ENCODE measurements at regions of chr18 and their contacts with region 1.

Region 1: DNA sequence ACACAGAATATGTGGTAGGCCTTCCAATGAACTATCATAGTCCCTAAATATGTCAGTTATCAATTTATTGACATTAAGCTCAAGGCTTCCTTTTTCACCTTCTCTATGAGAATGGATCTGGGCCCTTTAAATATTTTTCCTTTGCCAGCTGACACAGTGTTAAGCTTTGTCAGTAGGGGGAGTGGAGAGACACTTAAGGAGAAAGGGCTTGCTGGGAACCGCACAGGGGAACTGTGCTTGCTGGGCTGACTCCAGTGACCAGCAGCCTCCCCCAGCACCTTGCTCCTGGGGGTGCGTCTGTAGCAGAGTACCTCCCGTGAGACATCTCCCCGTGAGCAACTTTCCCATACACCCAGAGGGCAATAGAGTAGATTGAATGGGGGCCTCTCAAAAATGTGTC is 6.5 kb upstream of the PTPN2 start:
- DNase-seq: no peak
- ATAC-seq: no peak
- H3K4me3 ChIP-seq: no peak overlapping the region
- H3K4me3 Mint-ChIP-seq: no peak overlapping the region
- H3K27ac ChIP-seq: no peak overlapping the region
- H3K27ac Mint-ChIP-seq: no peak overlapping the region
- H3K4me1 ChIP-seq: peaks cover 4% of the 10 kb centered on the region
- H3K4me1 Mint-ChIP-seq: peaks cover 15% of the 10 kb centered on the region
- H3K27me3 ChIP-seq: peaks cover 0 to 9% of the 10 kb centered on the region in 2 experiments
- H3K27me3 Mint-ChIP-seq: peaks cover 14% of the 10 kb centered on the region
- CTCF ChIP-seq: no peak

Region 2: GRCh38 chr18:12391618-12392165 is 498.8 kb before region 1 on chr18:
- CTCF ChIA-PET with region 1: no interaction called
- POLR2A ChIA-PET with region 1: no interaction called
- intact Hi-C with region 1: loop called (anchors 5 kb)
- DNase-seq: peak; percentile 22 to 75 (median 35)
- ATAC-seq: peak; percentile 99
- H3K4me3 ChIP-seq: no peak overlapping the region
- H3K4me3 Mint-ChIP-seq: no peak overlapping the region
- H3K27ac ChIP-seq: no peak overlapping the region
- H3K27ac Mint-ChIP-seq: no peak overlapping the region
- H3K4me1 ChIP-seq: no peaks in the 10 kb centered on the region
- H3K4me1 Mint-ChIP-seq: no peaks in the 10 kb centered on the region
- H3K27me3 ChIP-seq: peaks cover 0 to 3% of the 10 kb centered on the region in 2 experiments
- H3K27me3 Mint-ChIP-seq: peaks cover 12% of the 10 kb centered on the region
- CTCF ChIP-seq: peak; percentile 82

Region 3: DNA sequence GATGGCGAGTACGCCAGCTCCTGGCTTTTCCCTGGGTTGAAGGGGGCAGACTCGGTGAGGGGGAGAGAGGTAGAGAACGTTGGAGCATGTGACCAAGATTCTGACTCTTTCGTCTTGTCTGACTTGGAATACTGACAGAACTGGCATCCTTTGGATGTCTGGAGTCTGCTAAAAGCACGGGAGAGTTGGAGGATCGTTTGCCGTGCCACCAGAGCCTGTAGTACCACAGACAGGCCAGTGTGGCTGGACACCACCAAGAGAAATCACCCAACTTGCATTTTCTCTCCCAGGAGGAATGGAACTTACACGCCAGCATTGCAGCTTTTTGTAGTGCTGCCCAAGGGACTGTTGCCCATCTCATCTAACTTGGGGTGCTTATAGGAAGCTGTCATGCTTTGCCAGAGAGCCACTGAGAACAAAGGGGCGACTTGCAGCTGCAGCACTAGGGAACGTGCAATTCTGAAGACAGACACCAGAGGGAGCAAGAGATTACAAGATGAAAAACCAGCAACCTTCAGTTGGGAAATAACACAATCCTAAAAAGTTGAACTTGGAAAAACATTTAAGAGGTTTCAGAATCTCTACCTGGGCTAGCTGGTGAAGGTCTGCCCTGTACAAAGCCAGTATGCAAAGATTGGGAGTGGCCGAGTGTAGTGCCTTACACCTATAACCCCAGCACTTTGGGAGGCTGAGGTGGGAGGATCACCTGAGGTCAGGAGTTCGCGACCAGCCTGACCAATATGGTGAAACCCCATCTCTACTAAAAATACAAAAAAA is 163.5 kb before region 1 on chr18:
- CTCF ChIA-PET with region 1: interaction called, 7 read pairs
- POLR2A ChIA-PET with region 1: no interaction called
- intact Hi-C with region 1: loop called (anchors 1 kb)
- DNase-seq: peak in 13 of 14 experiments; percentile 7 to 82 (median 44)
- ATAC-seq: peak; percentile 67
- H3K4me3 ChIP-seq: no peak overlapping the region
- H3K4me3 Mint-ChIP-seq: no peak overlapping the region
- H3K27ac ChIP-seq: no peak overlapping the region
- H3K27ac Mint-ChIP-seq: no peak overlapping the region
- H3K4me1 ChIP-seq: no peaks in the 10 kb centered on the region
- H3K4me1 Mint-ChIP-seq: peaks cover 2% of the 10 kb centered on the region
- H3K27me3 ChIP-seq: no peaks in the 10 kb centered on the region
- H3K27me3 Mint-ChIP-seq: no peaks in the 10 kb centered on the region
- CTCF ChIP-seq: peak; percentile 98

Region 4: DNA sequence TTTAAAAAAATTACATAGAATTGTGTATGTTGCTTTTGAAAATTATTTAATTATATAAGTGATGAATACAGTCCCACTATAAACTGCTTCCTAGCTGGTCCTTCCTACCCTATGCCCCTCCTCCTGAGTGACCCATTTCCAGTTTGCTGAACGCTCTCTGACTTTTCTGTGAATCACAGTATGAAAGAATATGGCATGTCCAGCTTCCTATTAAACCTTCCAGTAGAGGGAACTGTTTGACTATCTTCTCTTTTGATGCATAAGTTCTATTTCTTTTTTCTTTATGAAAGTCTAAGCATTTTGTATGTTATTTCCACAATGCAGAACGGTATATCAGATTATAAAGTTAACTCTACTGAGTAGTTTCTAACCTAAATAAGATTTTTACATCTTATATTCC is 146.4 kb before region 1 on chr18:
- CTCF ChIA-PET with region 1: interaction called, 7 read pairs
- POLR2A ChIA-PET with region 1: no interaction called
- intact Hi-C with region 1: loop called (anchors 1 kb)
- DNase-seq: peak in 3 of 14 experiments; percentile 59 to 65 (median 63)
- ATAC-seq: peak; percentile 51
- H3K4me3 ChIP-seq: no peak overlapping the region
- H3K4me3 Mint-ChIP-seq: no peak overlapping the region
- H3K27ac ChIP-seq: no peak overlapping the region
- H3K27ac Mint-ChIP-seq: no peak overlapping the region
- H3K4me1 ChIP-seq: no peaks in the 10 kb centered on the region
- H3K4me1 Mint-ChIP-seq: peaks cover 2% of the 10 kb centered on the region
- H3K27me3 ChIP-seq: no peaks in the 10 kb centered on the region
- H3K27me3 Mint-ChIP-seq: no peaks in the 10 kb centered on the region
- CTCF ChIP-seq: peak; percentile 54

Measured in CD4-positive, alpha-beta T cell (primary cell).